Transverse colon (tissue), 4 donors: ENCODE measurements at regions of chr12 and their contacts with region 1.

Region 1: GRCh38 chr12:51994959-51995358 is 11.8 kb upstream of the TAMALIN start:
- DNase-seq: no peak
- H3K4me3 ChIP-seq: no peak overlapping the region
- H3K27ac ChIP-seq: no peak overlapping the region
- H3K4me1 ChIP-seq: no peaks in the 10 kb centered on the region
- H3K27me3 ChIP-seq: no peaks in the 10 kb centered on the region
- CTCF ChIP-seq: no peak
- EP300 ChIP-seq: no peak
- POLR2A ChIP-seq: no peak

Region 2: GRCh38 chr12:52230327-52231291 is 235.7 kb after region 1 on chr12:
- in situ Hi-C with region 1: no loop called
- intact Hi-C with region 1: loop called (anchors 5 kb)
- DNase-seq: no peak
- H3K4me3 ChIP-seq: no peak overlapping the region
- H3K27ac ChIP-seq: no peak overlapping the region
- H3K4me1 ChIP-seq: peaks cover 0 to 18% (median 10%) of the 10 kb centered on the region in 4 donors
- H3K27me3 ChIP-seq: peaks cover 21% of the 10 kb centered on the region
- CTCF ChIP-seq: no peak
- EP300 ChIP-seq: no peak
- POLR2A ChIP-seq: no peak

Region 3: DNA sequence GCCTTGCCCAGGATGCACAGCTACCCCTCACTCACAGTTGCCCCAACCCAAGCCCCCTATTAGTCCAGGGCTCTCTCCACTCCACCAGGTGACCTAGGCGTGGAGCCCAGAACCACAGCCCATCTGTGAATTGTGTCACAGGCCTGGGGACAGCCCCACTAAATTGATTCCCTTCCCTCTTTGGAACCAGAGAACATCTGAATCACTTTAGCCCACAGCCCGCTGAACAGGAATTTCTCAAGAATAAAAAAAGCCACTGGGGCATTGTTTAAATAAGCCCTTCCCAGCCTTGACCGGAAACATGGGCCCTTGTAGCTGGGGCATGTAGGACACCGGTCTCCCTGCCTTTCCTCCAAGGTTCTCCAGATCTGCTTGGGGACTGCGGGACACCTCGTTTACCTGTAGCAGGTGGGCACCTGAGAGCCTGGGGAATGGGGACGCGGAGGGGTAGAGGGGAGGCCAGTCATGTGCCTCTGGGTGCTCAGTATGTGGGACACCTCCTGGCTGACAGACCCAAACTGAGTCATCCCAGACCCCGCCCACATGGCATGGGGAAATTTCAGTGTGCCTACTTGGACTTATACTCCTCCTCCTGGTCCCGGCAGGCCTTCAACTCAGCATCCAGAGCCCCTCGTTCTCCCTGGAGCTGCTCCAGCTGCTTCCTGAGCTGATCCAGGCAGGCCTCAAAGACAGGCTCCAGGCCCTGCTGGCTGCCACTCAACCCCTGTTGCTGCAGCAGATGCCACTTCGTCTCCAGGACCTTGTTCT is 852.6 kb after region 1 on chr12:
- in situ Hi-C with region 1: no loop called
- intact Hi-C with region 1: no loop called
- DNase-seq: no peak
- H3K4me3 ChIP-seq: no peak overlapping the region
- H3K27ac ChIP-seq: no peak overlapping the region
- H3K4me1 ChIP-seq: no peaks in the 10 kb centered on the region
- H3K27me3 ChIP-seq: no peaks in the 10 kb centered on the region
- CTCF ChIP-seq: no peak
- EP300 ChIP-seq: no peak
- POLR2A ChIP-seq: no peak